ENCODE measurements at regions of chr5 and their contacts with region 1.

Region 1: DNA sequence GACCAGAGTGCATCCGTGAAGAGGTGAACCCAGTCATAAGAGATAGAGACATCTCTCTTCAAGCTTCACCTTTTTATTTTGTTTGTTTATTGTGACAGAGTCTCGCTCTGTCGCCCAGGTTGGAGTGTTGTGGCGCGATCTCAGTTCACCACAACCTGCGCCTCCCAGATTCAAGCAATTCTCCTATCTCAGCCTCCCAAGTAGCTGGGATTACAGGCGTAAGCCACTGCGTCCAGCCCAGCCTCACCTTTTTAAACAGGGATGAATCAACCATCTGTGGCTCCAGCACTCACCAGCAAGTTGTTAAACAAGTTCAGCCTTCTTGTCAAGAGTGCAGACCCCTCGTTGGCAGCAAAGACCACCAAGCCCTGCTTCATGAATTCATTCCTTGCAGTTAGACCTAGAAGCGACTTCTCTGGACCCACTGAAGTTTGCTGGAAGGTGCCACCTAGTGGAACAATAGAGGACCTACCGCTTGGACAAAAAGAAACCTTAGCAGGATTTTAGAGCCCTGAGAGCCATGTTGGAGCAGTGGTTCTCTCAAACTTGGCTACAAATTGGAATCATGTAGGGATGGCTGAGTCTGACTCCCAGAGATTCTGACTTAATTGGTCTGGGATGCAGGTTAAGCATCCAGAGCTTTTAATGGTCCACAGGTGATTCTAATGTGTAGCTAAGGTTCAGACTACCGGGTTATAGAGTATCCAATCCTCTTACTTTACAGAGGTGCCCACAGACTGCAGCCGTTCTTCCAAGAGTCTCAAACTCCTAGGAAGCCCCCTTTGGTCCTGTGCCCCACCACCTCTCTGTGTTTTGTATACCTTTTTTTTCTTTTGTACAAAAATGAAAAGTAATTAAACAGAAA is 10.5 kb upstream of the GALNT10 start:
- DNase-seq: no peak
- H3K4me3 ChIP-seq: no peak overlapping the region
- H3K27ac ChIP-seq: no peak overlapping the region
- H3K4me1 ChIP-seq: peaks cover 4% of the 10 kb centered on the region
- H3K27me3 ChIP-seq: no peaks in the 10 kb centered on the region
- CTCF ChIP-seq: peak in 2 of 3 experiments; percentile 57 to 78
- POLR2A ChIP-seq: no peak

Region 2: DNA sequence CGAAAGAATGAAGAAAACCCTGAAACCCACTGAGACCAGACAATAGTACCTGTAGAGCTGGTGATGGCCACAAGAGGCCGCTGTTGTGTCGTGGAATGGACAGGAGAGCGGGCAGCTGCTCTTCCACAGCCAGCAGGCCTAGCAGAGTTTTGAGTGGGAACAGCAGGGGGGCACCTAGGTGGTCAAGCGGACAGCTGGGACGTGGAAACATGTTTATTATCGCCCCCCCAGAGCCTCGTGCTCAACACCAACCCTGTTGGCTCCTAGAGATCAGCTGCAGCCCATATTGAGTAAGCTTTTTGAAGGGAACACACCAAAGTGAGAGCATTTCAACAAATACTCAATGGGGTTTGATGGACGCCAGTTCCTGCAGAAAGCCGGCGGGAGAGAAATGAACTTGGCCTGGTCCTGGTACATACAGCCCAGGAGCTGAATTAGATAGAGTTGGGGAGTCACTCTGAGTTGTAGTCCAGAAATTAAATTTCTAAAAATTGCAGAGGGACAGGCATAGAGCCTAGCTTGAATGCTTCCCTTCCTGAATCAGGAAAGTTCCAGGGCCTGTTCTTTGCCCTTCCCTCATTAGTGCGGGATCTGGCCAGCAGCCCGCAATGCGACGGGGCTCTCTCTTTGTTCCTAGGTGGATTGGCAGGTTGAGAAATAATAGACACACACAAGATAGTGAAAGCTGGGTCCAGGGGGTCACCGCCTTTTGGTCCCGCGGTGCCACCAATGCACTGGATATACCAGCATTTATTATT is 107.5 kb before region 1 on chr5:
- intact Hi-C with region 1: loop called (anchors 5 kb)
- DNase-seq: no peak
- H3K4me3 ChIP-seq: no peak overlapping the region
- H3K27ac ChIP-seq: no peak overlapping the region
- H3K4me1 ChIP-seq: no peaks in the 10 kb centered on the region
- H3K27me3 ChIP-seq: no peaks in the 10 kb centered on the region
- CTCF ChIP-seq: peak; percentile 85 to 96 (median 93)
- POLR2A ChIP-seq: no peak

Region 3: GRCh38 chr5:154084062-154084639 is 95.9 kb before region 1 on chr5:
- intact Hi-C with region 1: loop called (anchors 5 kb)
- DNase-seq: no peak
- H3K4me3 ChIP-seq: no peak overlapping the region
- H3K27ac ChIP-seq: no peak overlapping the region
- H3K4me1 ChIP-seq: no peaks in the 10 kb centered on the region
- H3K27me3 ChIP-seq: no peaks in the 10 kb centered on the region
- CTCF ChIP-seq: no peak
- POLR2A ChIP-seq: no peak